ENCODE measurements at regions of chr11 and their contacts with region 1.

Region 1: DNA sequence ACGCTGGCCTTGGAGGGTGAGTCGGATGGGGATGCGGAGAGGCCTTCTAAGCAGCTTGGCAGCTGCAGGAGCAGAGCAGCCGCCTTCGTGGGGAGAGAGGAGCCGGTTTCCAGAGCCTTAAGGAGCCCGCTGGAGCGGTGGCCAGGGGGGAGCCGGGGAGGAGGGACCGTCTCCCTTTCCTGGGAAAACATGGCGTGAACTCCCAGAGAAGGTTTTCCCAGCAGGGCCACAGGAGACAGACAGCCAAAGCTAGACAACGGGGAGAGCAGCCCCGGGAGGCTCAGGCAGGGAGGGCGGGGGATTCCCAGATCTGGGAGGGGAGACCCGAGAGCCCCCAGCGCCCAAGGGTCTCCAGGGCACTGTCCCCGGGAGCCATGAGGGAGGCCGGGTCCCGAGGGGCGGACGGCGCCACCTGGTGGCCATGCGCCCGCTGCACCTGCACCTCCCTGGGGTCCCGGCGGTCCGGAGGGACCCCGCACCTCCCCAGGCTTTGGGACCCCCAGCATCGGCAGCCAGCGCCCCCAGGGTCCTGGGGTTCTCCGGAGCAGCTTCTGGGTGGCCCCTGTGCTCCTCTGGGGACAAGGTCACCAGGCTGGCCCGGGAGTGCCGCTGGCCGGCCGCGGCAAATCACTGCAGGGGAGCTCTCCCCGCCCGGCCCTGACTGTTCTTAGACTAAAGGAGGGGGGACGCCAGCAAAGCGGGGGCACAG is 2.4 kb upstream of the SYT8 start:
- DNase-seq: peak; percentile 43 to 87 (median 70)
- ATAC-seq: peak; percentile 77
- H3K4me3 ChIP-seq: no peak overlapping the region
- H3K4me3 Mint-ChIP-seq: no peak overlapping the region
- H3K27ac ChIP-seq: no peak overlapping the region
- H3K27ac Mint-ChIP-seq: no peak overlapping the region
- H3K4me1 ChIP-seq: peaks cover 7% of the 10 kb centered on the region
- H3K4me1 Mint-ChIP-seq: no peaks in the 10 kb centered on the region
- H3K27me3 ChIP-seq: peaks cover 0 to 6% of the 10 kb centered on the region in 2 experiments
- H3K27me3 Mint-ChIP-seq: peaks cover 2% of the 10 kb centered on the region
- CTCF ChIP-seq: peak; percentile 95

Region 2: GRCh38 chr11:1619449-1619848 is 212.9 kb before region 1 on chr11:
- CTCF ChIA-PET with region 1: no interaction called
- POLR2A ChIA-PET with region 1: no interaction called
- intact Hi-C with region 1: no loop called
- DNase-seq: peak in 2 of 9 experiments; percentile 41 to 53
- ATAC-seq: peak; percentile 73
- H3K4me3 ChIP-seq: no peak overlapping the region
- H3K4me3 Mint-ChIP-seq: no peak overlapping the region
- H3K27ac ChIP-seq: no peak overlapping the region
- H3K27ac Mint-ChIP-seq: no peak overlapping the region
- H3K4me1 ChIP-seq: no peaks in the 10 kb centered on the region
- H3K4me1 Mint-ChIP-seq: peaks cover 4% of the 10 kb centered on the region
- H3K27me3 ChIP-seq: no peaks in the 10 kb centered on the region
- H3K27me3 Mint-ChIP-seq: peaks cover 37% of the 10 kb centered on the region
- CTCF ChIP-seq: no peak

Region 3: DNA sequence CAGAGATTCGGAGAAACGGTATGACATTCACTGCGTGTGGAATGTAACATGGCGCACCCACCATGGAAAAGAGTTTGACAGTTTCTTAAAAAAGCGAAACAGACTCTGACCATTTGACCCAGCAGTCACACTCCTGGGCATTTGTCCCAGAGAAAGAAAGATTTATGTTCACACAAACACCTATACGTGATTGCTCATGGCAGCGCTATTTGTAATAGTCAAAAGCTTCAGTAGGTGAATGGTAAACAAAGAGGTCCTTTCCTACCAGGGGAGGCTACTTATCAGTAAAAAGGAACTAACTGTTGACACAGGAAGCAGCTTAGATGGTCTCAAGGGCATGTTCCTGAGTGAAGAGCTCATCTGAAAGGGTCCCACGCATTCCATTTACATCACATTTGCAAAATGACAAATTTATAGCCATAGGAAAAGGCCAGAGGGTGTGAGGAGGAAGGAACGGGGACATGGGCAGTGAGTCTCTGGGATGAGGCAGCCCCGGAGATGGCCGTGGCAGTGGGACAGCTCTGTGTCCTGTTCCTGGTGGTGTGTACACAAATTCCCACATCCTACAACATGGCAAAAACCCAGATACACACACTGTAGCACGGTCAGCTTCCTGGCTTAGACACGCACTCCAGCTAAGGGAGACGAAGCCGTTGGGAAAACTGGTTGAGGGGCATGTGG is 150.0 kb before region 1 on chr11:
- CTCF ChIA-PET with region 1: interaction called, 18 read pairs
- POLR2A ChIA-PET with region 1: no interaction called
- intact Hi-C with region 1: no loop called
- DNase-seq: no peak
- ATAC-seq: no peak
- H3K4me3 ChIP-seq: no peak overlapping the region
- H3K4me3 Mint-ChIP-seq: no peak overlapping the region
- H3K27ac ChIP-seq: no peak overlapping the region
- H3K27ac Mint-ChIP-seq: no peak overlapping the region
- H3K4me1 ChIP-seq: no peaks in the 10 kb centered on the region
- H3K4me1 Mint-ChIP-seq: no peaks in the 10 kb centered on the region
- H3K27me3 ChIP-seq: peaks cover 0 to 5% of the 10 kb centered on the region in 2 experiments
- H3K27me3 Mint-ChIP-seq: peaks cover 13% of the 10 kb centered on the region
- CTCF ChIP-seq: no peak

Region 4: DNA sequence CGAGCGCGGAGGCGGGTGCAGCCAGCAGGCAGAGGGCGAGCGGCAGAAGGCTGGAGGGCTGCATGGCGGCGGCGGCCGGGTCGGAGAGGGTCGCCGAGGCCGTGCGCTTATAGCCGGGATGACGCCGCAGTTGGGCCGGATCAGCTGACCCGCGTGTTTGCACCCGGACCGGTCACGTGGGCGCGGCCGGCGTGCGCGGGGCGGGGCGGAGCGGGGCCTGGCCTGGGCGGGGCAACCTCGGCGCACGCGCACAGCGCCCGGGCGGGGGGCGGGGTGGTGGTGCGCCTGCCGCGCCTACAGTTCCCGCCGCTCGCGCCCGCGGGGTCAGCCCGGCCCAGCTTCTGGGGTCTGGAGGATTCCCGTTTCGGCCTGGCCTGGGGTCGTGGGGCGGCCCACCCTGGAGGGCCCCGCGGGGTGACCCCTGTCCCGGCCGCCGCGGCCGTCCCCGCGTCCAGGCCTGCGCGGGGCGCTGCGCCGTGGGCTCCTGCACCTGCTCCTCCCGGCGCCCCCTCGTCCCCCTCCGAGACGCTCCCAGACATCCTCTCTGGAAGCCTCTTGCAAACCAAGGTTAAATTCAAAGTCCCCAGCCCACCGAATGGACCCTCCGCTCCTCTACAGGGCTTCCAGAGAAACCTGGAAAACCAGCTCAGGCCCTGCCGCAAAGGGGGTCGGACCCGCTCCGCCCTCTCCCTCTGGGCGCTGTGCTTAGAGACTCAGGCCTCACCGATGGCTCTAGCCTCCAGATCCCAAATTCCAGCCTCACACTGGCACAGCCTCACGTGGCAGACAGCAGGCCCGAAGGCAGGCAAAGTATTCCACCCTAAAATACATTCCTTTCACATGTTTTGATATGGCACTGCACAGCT is 68.3 kb before region 1 on chr11 and contains the start of gene CTSD:
- CTCF ChIA-PET with region 1: interaction called, 15 read pairs
- POLR2A ChIA-PET with region 1: no interaction called
- intact Hi-C with region 1: no loop called
- DNase-seq: peak; percentile 69 to 95 (median 88)
- ATAC-seq: peak; percentile 87
- H3K4me3 ChIP-seq: peak within 1 kb of the TSS; percentile 66 to 85
- H3K4me3 Mint-ChIP-seq: peak within 1 kb of the TSS; percentile 87
- H3K27ac ChIP-seq: peak within 1 kb of the TSS; percentile 45 to 62
- H3K27ac Mint-ChIP-seq: peak within 1 kb of the TSS; percentile 86
- H3K4me1 ChIP-seq: peaks cover 49% of the 10 kb centered on the region
- H3K4me1 Mint-ChIP-seq: peaks cover 35% of the 10 kb centered on the region
- H3K27me3 ChIP-seq: no peaks in the 10 kb centered on the region
- H3K27me3 Mint-ChIP-seq: no peaks in the 10 kb centered on the region
- CTCF ChIP-seq: no peak
- total RNA-seq, gene CTSD: 54.3 to 57.9 TPM

Region 5: GRCh38 chr11:1807264-1807995 is 24.9 kb before region 1 on chr11:
- CTCF ChIA-PET with region 1: interaction called, 36 read pairs
- POLR2A ChIA-PET with region 1: no interaction called
- intact Hi-C with region 1: no loop called
- DNase-seq: peak in 1 of 9 experiments; percentile 28
- ATAC-seq: no peak
- H3K4me3 ChIP-seq: no peak overlapping the region
- H3K4me3 Mint-ChIP-seq: no peak overlapping the region
- H3K27ac ChIP-seq: no peak overlapping the region
- H3K27ac Mint-ChIP-seq: no peak overlapping the region
- H3K4me1 ChIP-seq: no peaks in the 10 kb centered on the region
- H3K4me1 Mint-ChIP-seq: no peaks in the 10 kb centered on the region
- H3K27me3 ChIP-seq: no peaks in the 10 kb centered on the region
- H3K27me3 Mint-ChIP-seq: peaks cover 7% of the 10 kb centered on the region
- CTCF ChIP-seq: no peak

Region 6: DNA sequence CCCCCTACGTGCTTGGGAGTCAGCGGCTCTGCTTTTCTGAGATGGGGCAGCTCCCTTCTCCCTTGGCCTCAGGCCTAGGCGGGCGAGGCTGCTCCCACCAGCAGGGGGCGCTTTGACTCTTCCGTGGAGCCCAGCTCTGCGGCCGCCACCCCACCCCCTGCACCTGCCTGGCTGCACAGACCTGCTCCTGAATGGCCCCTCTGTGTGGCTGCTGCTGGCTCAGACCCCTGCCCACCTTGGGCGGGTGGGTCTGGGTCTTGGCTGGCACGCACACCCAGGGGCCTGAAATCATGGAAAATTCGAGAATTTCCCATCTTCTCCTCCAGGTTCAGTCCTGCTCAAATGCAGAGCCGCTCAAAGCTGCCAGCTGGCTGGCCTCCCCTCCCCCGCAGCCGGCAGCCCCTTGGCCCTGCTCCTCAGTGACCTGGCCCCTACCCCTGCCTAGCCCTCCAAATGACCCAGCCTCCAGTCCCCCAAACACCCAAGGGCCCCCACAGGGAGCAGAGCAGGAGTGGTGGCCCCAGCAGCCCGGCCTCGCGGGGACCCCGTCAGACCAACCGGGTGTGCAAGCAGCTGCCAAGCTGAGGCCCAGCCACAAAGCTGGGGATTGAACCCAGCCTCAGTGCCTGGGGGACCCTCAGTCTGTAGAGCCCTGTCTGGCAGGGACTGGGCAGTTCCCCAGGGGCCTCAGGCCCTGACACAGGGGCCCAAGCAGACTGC is 50.3 kb after region 1 on chr11:
- CTCF ChIA-PET with region 1: interaction called, 16 read pairs
- POLR2A ChIA-PET with region 1: interaction called, 3 read pairs
- intact Hi-C with region 1: loop called (anchors 1 kb)
- DNase-seq: peak; percentile 57 to 91 (median 83)
- ATAC-seq: peak; percentile 91
- H3K4me3 ChIP-seq: no peak overlapping the region
- H3K4me3 Mint-ChIP-seq: no peak overlapping the region
- H3K27ac ChIP-seq: no peak overlapping the region
- H3K27ac Mint-ChIP-seq: no peak overlapping the region
- H3K4me1 ChIP-seq: peaks cover 14% of the 10 kb centered on the region
- H3K4me1 Mint-ChIP-seq: peaks cover 12% of the 10 kb centered on the region
- H3K27me3 ChIP-seq: no peaks in the 10 kb centered on the region
- H3K27me3 Mint-ChIP-seq: no peaks in the 10 kb centered on the region
- CTCF ChIP-seq: peak; percentile 69

Region 7: DNA sequence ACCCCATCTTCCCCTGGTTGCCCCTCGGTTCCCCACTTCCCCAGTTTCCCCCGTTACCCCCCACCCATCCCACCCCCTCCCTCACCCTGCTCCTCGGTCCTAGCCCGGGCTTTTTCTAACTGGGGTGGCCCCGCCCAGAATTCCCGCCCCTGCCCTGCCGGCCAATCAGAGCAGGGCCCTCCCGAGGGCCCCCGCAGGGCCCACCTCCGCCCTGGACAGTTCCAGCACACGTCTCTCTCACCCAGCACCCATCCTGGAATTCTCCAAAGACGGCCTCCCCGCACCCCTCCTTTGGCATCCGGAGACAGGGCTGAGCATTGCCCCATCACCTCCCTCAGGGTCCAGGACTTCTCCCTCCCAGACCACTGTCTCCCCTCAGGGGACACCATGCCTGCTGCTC is 165.4 kb after region 1 on chr11 and contains the start of gene H19:
- CTCF ChIA-PET with region 1: interaction called, 111 read pairs
- POLR2A ChIA-PET with region 1: interaction called, 3 read pairs
- intact Hi-C with region 1: no loop called
- DNase-seq: no peak
- ATAC-seq: no peak
- H3K4me3 ChIP-seq: no peak within 1 kb of the TSS
- H3K4me3 Mint-ChIP-seq: no peak within 1 kb of the TSS
- H3K27ac ChIP-seq: no peak within 1 kb of the TSS
- H3K27ac Mint-ChIP-seq: no peak within 1 kb of the TSS
- H3K4me1 ChIP-seq: no peaks in the 10 kb centered on the region
- H3K4me1 Mint-ChIP-seq: no peaks in the 10 kb centered on the region
- H3K27me3 ChIP-seq: no peaks in the 10 kb centered on the region
- H3K27me3 Mint-ChIP-seq: no peaks in the 10 kb centered on the region
- CTCF ChIP-seq: no peak
- total RNA-seq, gene H19: not detected